MCF 10A (cell line): ENCODE measurements at regions of chr13 and their contacts with region 1.

Region 1: DNA sequence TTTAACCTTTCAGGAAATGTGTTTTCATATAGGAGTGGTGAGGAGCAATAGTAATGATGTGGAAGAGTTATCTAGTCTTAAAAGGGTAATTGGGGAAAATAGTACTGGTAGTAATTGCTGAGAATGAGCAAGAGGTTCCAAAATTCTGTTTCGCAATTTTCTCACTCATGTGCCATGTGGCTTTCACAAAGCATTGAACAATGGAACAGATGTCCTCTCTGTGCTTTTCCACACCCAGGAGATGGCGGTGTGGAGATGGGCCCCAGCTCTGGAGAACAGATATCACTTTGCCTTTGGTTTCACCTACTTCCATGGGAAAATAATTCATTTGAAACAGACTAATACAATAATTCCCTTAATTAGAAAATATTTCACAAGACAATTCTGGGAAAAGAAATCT is 170.0 kb upstream of the SLC10A2 start:
- DNase-seq: peak; percentile 59
- H3K4me3 Mint-ChIP-seq: no peak overlapping the region
- H3K27ac Mint-ChIP-seq: peak overlapping the region; percentile 2
- H3K4me1 Mint-ChIP-seq: peaks cover 6% of the 10 kb centered on the region
- H3K27me3 Mint-ChIP-seq: no peaks in the 10 kb centered on the region
- CTCF ChIP-seq: peak; percentile 27

Region 2: DNA sequence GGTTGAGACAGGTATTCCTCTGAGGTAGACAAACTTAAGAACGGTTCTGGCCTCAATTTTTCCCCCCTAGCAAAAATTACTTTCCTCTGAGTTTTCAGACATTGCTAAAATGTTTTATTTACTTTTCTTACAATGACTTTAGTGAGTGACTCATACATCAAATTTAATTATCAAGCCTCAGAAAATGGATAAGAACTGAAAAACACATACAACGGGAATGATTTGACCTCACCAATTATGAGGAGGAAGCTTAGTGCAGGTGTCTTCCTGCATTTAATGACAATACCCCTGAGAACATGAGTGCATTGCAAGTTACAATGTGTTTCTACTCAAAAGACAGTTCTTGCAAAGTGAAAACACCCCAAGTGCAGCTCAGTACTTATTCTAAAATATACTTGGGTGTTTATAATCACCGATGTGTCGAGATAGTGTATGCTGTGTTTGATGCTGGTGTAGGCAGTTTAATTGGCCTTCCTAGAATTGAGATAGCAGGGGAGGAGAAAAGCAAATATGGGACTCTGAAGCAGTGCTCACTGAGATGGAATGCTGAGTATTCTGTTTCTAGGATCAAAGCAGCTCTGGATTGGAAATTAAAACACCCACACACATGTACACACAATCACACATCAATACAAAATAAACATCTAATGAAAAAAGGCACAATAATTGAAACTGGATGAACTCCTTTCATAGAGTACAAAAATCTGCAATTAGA is 19.5 kb after region 1 on chr13:
- CTCF ChIA-PET with region 1: no interaction called
- POLR2A ChIA-PET with region 1: no interaction called
- intact Hi-C with region 1: no loop called
- DNase-seq: no peak
- H3K4me3 Mint-ChIP-seq: no peak overlapping the region
- H3K27ac Mint-ChIP-seq: no peak overlapping the region
- H3K4me1 Mint-ChIP-seq: peaks cover 6% of the 10 kb centered on the region
- H3K27me3 Mint-ChIP-seq: no peaks in the 10 kb centered on the region
- CTCF ChIP-seq: no peak

Region 3: GRCh38 chr13:103349211-103349980 is 113.2 kb after region 1 on chr13:
- CTCF ChIA-PET with region 1: no interaction called
- POLR2A ChIA-PET with region 1: no interaction called
- intact Hi-C with region 1: loop called (anchors 5 kb)
- DNase-seq: no peak
- H3K4me3 Mint-ChIP-seq: no peak overlapping the region
- H3K27ac Mint-ChIP-seq: no peak overlapping the region
- H3K4me1 Mint-ChIP-seq: peaks cover 20% of the 10 kb centered on the region
- H3K27me3 Mint-ChIP-seq: no peaks in the 10 kb centered on the region
- CTCF ChIP-seq: no peak